ENCODE measurements at regions of chr11 and their contacts with region 1.

Region 1: GRCh38 chr11:14308114-14308896 is 50.7 kb downstream of the RRAS2 start:
- DNase-seq: no peak
- ATAC-seq: peak; percentile 64
- H3K4me3 ChIP-seq: no peak overlapping the region
- H3K27ac ChIP-seq: peak overlapping the region; percentile 64
- H3K4me1 ChIP-seq: peaks cover 49% of the 10 kb centered on the region
- H3K27me3 ChIP-seq: no peaks in the 10 kb centered on the region
- CTCF ChIP-seq: peak; percentile 62 to 67 (median 66)
- EP300 ChIP-seq: no peak
- POLR2A ChIP-seq: no peak
- RAD21 ChIP-seq: peak; percentile 61

Region 2: DNA sequence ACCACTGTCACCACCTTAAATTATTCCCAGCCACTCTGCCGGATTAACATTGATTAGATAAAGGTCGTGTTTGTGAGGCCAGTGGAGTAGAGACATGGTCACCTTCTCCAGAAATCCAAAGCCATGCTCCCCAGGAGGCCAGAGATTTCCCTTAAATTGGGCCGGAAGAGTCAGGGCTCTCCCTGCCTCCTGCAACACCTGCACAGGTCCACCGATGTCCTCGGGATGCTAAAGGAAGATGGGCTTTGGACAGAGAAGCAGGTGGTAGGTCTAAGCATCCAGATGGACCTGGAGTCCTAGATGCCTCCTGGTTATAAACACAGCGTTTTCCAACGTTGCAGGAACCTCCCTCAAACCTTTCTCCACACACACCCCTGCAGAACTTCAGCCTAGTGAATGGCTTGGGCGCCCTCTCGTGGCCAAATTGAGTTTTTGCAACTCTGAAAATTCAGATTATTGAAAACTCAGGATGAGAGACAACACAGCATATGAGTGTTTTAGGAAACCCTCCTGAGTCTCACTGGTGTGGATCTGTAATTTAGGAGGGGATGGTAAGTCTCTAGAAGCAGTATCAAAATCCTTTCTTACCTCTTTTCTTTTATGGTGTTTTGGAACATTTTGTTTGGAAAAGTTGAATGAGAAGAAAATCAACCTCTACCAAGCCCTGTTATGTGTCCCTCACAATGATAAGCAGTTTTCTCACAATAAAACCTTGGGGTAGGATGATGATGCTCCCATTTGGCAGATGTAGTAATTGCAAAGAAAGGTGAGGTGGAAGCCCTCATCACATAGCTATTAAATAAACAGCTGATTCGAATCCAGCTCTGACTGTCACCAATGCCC is 59.0 kb before region 1 on chr11:
- CTCF ChIA-PET with region 1: interaction called, 10 read pairs
- POLR2A ChIA-PET with region 1: no interaction called
- RAD21 ChIA-PET with region 1: interaction called, 5 read pairs
- SMC1A ChIA-PET with region 1: interaction called, 11 read pairs
- in situ Hi-C with region 1: no loop called
- intact Hi-C with region 1: no loop called
- DNase-seq: no peak
- ATAC-seq: peak; percentile 71
- H3K4me3 ChIP-seq: no peak overlapping the region
- H3K27ac ChIP-seq: no peak overlapping the region
- H3K4me1 ChIP-seq: no peaks in the 10 kb centered on the region; the same call in 1 of the 2 replicates
- H3K27me3 ChIP-seq: no peaks in the 10 kb centered on the region; a peak in 1 of 4 replicates
- CTCF ChIP-seq: peak; percentile 70 to 93 (median 83)
- EP300 ChIP-seq: no peak
- POLR2A ChIP-seq: no peak
- RAD21 ChIP-seq: peak; percentile 99

Region 3: GRCh38 chr11:14331476-14332136 is 23.3 kb after region 1 on chr11:
- CTCF ChIA-PET with region 1: interaction called, 10 read pairs
- POLR2A ChIA-PET with region 1: interaction called, 11 read pairs
- RAD21 ChIA-PET with region 1: interaction called, 34 read pairs
- SMC1A ChIA-PET with region 1: interaction called, 89 read pairs
- in situ Hi-C with region 1: no loop called
- intact Hi-C with region 1: no loop called
- DNase-seq: no peak
- ATAC-seq: peak; percentile 77
- H3K4me3 ChIP-seq: peak overlapping the region; percentile 32; the same call in 1 of the 2 replicates
- H3K27ac ChIP-seq: peak overlapping the region; percentile 29; the same call in 1 of the 2 replicates
- H3K4me1 ChIP-seq: peaks cover 43% of the 10 kb centered on the region
- H3K27me3 ChIP-seq: no peaks in the 10 kb centered on the region
- CTCF ChIP-seq: no peak
- EP300 ChIP-seq: no peak
- POLR2A ChIP-seq: no peak
- RAD21 ChIP-seq: no peak

Region 4: DNA sequence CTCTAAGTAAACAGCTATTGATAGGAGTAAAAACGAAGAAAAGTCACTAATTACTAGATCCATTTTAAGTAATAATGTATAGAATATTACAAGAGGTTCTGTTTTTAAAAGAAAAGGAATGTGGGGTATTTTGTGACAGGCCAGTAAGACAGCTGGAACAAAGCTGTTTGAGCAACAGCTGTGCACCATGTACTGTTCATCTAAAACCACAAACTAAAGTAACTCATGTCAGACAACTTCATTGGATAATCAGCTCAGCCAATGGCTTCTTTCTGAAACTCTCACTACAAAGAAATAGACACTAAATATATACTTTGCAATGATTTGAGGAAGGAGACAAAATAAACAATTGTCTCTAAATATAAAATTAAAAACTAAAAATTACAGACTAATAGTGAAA is 34.6 kb after region 1 on chr11:
- CTCF ChIA-PET with region 1: interaction called, 16 read pairs
- POLR2A ChIA-PET with region 1: interaction called, 3 read pairs
- RAD21 ChIA-PET with region 1: interaction called, 10 read pairs
- SMC1A ChIA-PET with region 1: interaction called, 12 read pairs
- in situ Hi-C with region 1: no loop called
- intact Hi-C with region 1: no loop called
- DNase-seq: no peak
- ATAC-seq: peak; percentile 70
- H3K4me3 ChIP-seq: no peak overlapping the region
- H3K27ac ChIP-seq: peak overlapping the region; percentile 46; the same call in 1 of the 2 replicates
- H3K4me1 ChIP-seq: peaks cover 3% of the 10 kb centered on the region; the same call in 1 of the 2 replicates
- H3K27me3 ChIP-seq: no peaks in the 10 kb centered on the region
- CTCF ChIP-seq: no peak
- EP300 ChIP-seq: no peak
- POLR2A ChIP-seq: no peak
- RAD21 ChIP-seq: no peak

Region 5: GRCh38 chr11:14373931-14374646 is 65.8 kb after region 1 on chr11:
- CTCF ChIA-PET with region 1: interaction called, 4 read pairs
- POLR2A ChIA-PET with region 1: no interaction called
- RAD21 ChIA-PET with region 1: interaction called, 4 read pairs
- SMC1A ChIA-PET with region 1: interaction called, 16 read pairs
- in situ Hi-C with region 1: no loop called
- intact Hi-C with region 1: no loop called
- DNase-seq: no peak
- ATAC-seq: no peak
- H3K4me3 ChIP-seq: no peak overlapping the region
- H3K27ac ChIP-seq: no peak overlapping the region
- H3K4me1 ChIP-seq: peaks cover 7% of the 10 kb centered on the region
- H3K27me3 ChIP-seq: no peaks in the 10 kb centered on the region
- CTCF ChIP-seq: no peak
- EP300 ChIP-seq: no peak
- POLR2A ChIP-seq: no peak
- RAD21 ChIP-seq: no peak

Region 6: DNA sequence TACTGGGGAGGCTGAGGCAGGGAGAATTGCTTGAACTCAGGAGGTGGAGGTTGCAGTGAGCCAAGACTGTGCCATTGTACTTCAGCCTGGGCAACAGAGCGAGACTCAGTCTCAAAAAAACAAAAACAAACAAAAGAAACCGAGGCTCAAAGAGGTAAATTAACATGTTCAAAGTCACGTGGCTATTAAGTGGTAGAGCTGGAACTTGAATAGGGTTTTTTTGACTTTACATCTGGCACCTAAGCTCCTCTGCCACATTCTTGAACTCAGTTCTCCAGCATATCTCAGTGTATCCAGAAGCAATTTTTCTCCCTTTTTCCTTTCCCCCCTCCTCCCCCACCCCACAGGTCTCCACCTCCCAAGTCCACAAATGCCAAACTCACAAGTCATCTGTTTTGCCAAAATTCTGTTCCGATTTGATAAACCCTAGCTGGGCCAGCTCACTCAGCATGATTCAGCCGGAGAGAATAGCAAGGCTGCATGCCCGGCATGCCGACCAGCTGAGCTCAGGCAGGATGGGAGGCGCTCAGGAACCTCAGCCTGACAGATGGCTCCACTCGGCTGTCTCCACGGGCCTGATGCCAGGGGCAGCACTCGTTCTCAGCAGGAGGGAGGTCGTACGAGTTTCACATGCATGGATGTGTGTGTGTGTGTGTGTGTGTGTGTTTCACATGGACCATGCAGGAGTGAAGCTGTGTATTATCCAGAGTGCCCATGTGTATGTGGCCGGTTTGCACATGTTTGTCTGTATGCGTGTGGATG is 113.9 kb after region 1 on chr11:
- CTCF ChIA-PET with region 1: interaction called, 271 read pairs
- POLR2A ChIA-PET with region 1: no interaction called
- RAD21 ChIA-PET with region 1: interaction called, 123 read pairs
- SMC1A ChIA-PET with region 1: interaction called, 120 read pairs
- in situ Hi-C with region 1: no loop called
- intact Hi-C with region 1: no loop called
- DNase-seq: no peak
- ATAC-seq: no peak
- H3K4me3 ChIP-seq: no peak overlapping the region
- H3K27ac ChIP-seq: no peak overlapping the region
- H3K4me1 ChIP-seq: no peaks in the 10 kb centered on the region
- H3K27me3 ChIP-seq: no peaks in the 10 kb centered on the region
- CTCF ChIP-seq: no peak
- EP300 ChIP-seq: no peak
- POLR2A ChIP-seq: no peak
- RAD21 ChIP-seq: no peak

Measured in GM12878 (cell line).